ENCODE measurements at regions of chr1 and their contacts with region 1.

Region 1: GRCh38 chr1:21368515-21369289 is 71.2 kb upstream of the NBPF3 start:
- DNase-seq: peak; percentile 34 to 84 (median 65)
- ATAC-seq: peak; percentile 73
- H3K4me3 ChIP-seq: no peak overlapping the region
- H3K4me3 Mint-ChIP-seq: no peak overlapping the region
- H3K27ac ChIP-seq: no peak overlapping the region
- H3K27ac Mint-ChIP-seq: no peak overlapping the region
- H3K4me1 ChIP-seq: peaks cover 6% of the 10 kb centered on the region
- H3K4me1 Mint-ChIP-seq: peaks cover 10% of the 10 kb centered on the region
- H3K27me3 ChIP-seq: no peaks in the 10 kb centered on the region
- H3K27me3 Mint-ChIP-seq: no peaks in the 10 kb centered on the region
- CTCF ChIP-seq: peak; percentile 99

Region 2: GRCh38 chr1:21216835-21217811 is 151.6 kb before region 1 on chr1:
- CTCF ChIA-PET with region 1: interaction called, 49 read pairs
- POLR2A ChIA-PET with region 1: no interaction called
- intact Hi-C with region 1: loop called in 1 of 2 experiments (anchors 1 kb)
- DNase-seq: peak; percentile 26 to 79 (median 70)
- ATAC-seq: peak; percentile 78
- H3K4me3 ChIP-seq: no peak overlapping the region
- H3K4me3 Mint-ChIP-seq: no peak overlapping the region
- H3K27ac ChIP-seq: no peak overlapping the region
- H3K27ac Mint-ChIP-seq: no peak overlapping the region
- H3K4me1 ChIP-seq: no peaks in the 10 kb centered on the region
- H3K4me1 Mint-ChIP-seq: peaks cover 2% of the 10 kb centered on the region
- H3K27me3 ChIP-seq: no peaks in the 10 kb centered on the region
- H3K27me3 Mint-ChIP-seq: no peaks in the 10 kb centered on the region
- CTCF ChIP-seq: peak; percentile 75

Region 3: DNA sequence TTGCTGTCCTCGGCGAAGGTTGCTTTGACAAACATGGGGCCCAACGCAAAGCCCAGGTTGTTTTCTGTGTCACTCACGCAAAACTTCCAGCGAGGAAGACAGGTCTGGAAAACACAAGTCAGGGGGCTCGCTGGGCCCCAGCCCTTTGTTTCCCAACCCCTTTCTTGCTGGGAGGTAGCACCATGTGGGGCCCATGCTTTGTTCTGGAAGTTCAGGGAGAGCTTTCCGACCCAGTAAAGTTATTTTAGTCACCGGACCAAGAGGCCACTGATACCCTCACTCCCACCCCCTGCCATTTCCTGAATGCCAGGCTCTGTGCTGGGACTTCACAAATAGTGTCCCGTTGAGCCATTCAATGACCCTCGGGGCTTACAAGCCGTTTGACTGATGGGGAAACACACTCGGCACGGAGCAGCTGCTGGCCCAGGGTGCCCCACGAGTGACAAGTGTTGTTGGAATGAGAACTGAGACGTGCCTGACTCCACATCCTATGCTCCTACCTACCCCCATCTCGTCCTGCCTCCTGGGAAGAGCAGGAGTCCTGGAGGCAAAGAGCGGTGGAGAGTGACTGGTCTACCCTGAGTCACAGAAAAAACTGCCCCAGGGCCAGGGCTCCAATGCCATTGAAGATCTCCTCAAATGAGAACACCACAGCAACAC is 130.4 kb before region 1 on chr1:
- CTCF ChIA-PET with region 1: interaction called, 182 read pairs
- POLR2A ChIA-PET with region 1: interaction called, 3 read pairs
- intact Hi-C with region 1: no loop called
- DNase-seq: no peak
- ATAC-seq: no peak
- H3K4me3 ChIP-seq: no peak overlapping the region
- H3K4me3 Mint-ChIP-seq: no peak overlapping the region
- H3K27ac ChIP-seq: no peak overlapping the region
- H3K27ac Mint-ChIP-seq: no peak overlapping the region
- H3K4me1 ChIP-seq: no peaks in the 10 kb centered on the region
- H3K4me1 Mint-ChIP-seq: no peaks in the 10 kb centered on the region
- H3K27me3 ChIP-seq: no peaks in the 10 kb centered on the region
- H3K27me3 Mint-ChIP-seq: no peaks in the 10 kb centered on the region
- CTCF ChIP-seq: no peak

Region 4: DNA sequence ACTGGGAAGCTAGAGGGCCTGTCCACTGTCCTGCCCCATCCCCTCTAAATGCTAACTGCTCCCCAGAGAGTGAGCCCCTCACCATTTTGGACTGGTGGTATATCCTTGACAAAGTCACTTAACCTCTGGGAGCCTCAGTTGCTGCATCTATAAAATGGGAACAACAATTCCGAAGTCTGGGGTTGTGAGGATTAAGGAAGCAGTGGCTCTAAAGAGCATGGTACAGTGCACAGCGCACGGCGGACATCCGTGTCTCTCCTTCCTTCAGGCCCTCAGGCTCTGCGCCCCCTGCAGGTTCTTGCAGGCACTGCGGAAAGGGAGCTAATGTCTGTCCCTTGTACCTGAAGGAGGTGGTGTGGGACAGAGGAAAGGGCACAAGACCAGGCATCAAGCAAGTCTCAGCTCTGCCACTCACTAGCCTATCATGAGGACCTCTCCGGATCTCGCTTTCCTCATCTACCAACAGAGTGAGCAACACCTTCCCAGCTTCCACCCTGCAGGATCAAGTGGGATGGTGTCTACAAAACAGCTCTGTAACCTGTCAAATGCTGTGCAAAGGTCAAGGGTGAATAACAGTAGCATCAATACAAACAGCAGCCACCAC is 98.5 kb before region 1 on chr1:
- CTCF ChIA-PET with region 1: interaction called, 90 read pairs
- POLR2A ChIA-PET with region 1: no interaction called
- intact Hi-C with region 1: loop called in 1 of 2 experiments (anchors 1 kb)
- DNase-seq: peak; percentile 68 to 88 (median 80)
- ATAC-seq: peak; percentile 97
- H3K4me3 ChIP-seq: no peak overlapping the region
- H3K4me3 Mint-ChIP-seq: no peak overlapping the region
- H3K27ac ChIP-seq: no peak overlapping the region
- H3K27ac Mint-ChIP-seq: no peak overlapping the region
- H3K4me1 ChIP-seq: no peaks in the 10 kb centered on the region
- H3K4me1 Mint-ChIP-seq: peaks cover 12% of the 10 kb centered on the region
- H3K27me3 ChIP-seq: no peaks in the 10 kb centered on the region
- H3K27me3 Mint-ChIP-seq: no peaks in the 10 kb centered on the region
- CTCF ChIP-seq: peak; percentile 92

Region 5: GRCh38 chr1:21294266-21294989 is 74.3 kb before region 1 on chr1:
- CTCF ChIA-PET with region 1: interaction called, 24 read pairs
- POLR2A ChIA-PET with region 1: no interaction called
- intact Hi-C with region 1: no loop called
- DNase-seq: peak; percentile 71 to 97 (median 85)
- ATAC-seq: peak; percentile 72
- H3K4me3 ChIP-seq: peak overlapping the region; percentile 44 to 86
- H3K4me3 Mint-ChIP-seq: peak overlapping the region; percentile 86
- H3K27ac ChIP-seq: peak overlapping the region; percentile 91 to 94
- H3K27ac Mint-ChIP-seq: peak overlapping the region; percentile 98
- H3K4me1 ChIP-seq: peaks cover 80% of the 10 kb centered on the region
- H3K4me1 Mint-ChIP-seq: peaks cover 82% of the 10 kb centered on the region
- H3K27me3 ChIP-seq: no peaks in the 10 kb centered on the region
- H3K27me3 Mint-ChIP-seq: no peaks in the 10 kb centered on the region
- CTCF ChIP-seq: no peak

Region 6: GRCh38 chr1:21344750-21345443 is 23.8 kb before region 1 on chr1:
- CTCF ChIA-PET with region 1: interaction called, 11 read pairs
- POLR2A ChIA-PET with region 1: no interaction called
- intact Hi-C with region 1: no loop called
- DNase-seq: peak in 3 of 9 experiments; percentile 25 to 54 (median 30)
- ATAC-seq: peak; percentile 28
- H3K4me3 ChIP-seq: peak overlapping the region; percentile 75 to 94
- H3K4me3 Mint-ChIP-seq: peak overlapping the region; percentile 86
- H3K27ac ChIP-seq: peak overlapping the region in 1 of 2 experiments; percentile 55
- H3K27ac Mint-ChIP-seq: peak overlapping the region; percentile 76
- H3K4me1 ChIP-seq: peaks cover 53% of the 10 kb centered on the region
- H3K4me1 Mint-ChIP-seq: peaks cover 40% of the 10 kb centered on the region
- H3K27me3 ChIP-seq: peaks cover 0 to 8% of the 10 kb centered on the region in 2 experiments
- H3K27me3 Mint-ChIP-seq: no peaks in the 10 kb centered on the region
- CTCF ChIP-seq: no peak

Region 7: GRCh38 chr1:21659099-21659923 is 290.6 kb after region 1 on chr1:
- CTCF ChIA-PET with region 1: no interaction called
- POLR2A ChIA-PET with region 1: no interaction called
- intact Hi-C with region 1: loop called (anchors 2 to 10 kb)
- DNase-seq: peak; percentile 65 to 90 (median 84)
- ATAC-seq: peak; percentile 99
- H3K4me3 ChIP-seq: peak overlapping the region; percentile 8 to 10
- H3K4me3 Mint-ChIP-seq: peak overlapping the region; percentile 32
- H3K27ac ChIP-seq: no peak overlapping the region
- H3K27ac Mint-ChIP-seq: no peak overlapping the region
- H3K4me1 ChIP-seq: peaks cover 8% of the 10 kb centered on the region
- H3K4me1 Mint-ChIP-seq: peaks cover 5% of the 10 kb centered on the region
- H3K27me3 ChIP-seq: peaks cover 5 to 10% of the 10 kb centered on the region in 2 experiments
- H3K27me3 Mint-ChIP-seq: peaks cover 17% of the 10 kb centered on the region
- CTCF ChIP-seq: peak; percentile 93